ENCODE measurements at regions of chr4 and their contacts with region 1.

Region 1: DNA sequence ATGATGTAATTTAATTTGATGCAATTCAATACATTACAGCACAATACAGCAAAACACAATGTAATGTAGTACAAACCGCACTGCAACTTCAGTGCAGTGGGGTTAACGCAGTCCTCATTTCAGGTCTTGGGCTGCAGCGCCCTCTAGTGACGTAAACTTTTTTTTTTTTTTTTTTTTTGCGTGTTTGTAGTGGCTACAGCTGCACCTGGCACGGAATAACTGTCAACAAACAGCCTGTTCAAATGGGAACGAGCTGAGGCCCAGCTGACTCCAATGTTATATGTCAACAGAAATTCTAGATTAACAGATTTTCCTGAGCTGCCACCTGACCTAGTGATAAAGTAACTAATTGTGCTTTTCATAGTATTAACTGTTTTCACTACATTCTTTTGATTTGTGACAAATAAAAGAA is 33.5 kb upstream of the RASSF6 start:
- DNase-seq: peak in 2 of 10 donors; percentile 39 to 40
- H3K4me3 ChIP-seq: peak overlapping the region in 1 of 59 donors; percentile 5
- H3K27ac ChIP-seq: peak overlapping the region in 14 of 59 donors; percentile 18 to 62 (median 47)
- H3K27me3 ChIP-seq: peaks cover 0 to 6% (median 0%) of the 10 kb centered on the region in 45 donors
- CTCF ChIP-seq: peak; percentile 60 to 92 (median 80)

Region 2: DNA sequence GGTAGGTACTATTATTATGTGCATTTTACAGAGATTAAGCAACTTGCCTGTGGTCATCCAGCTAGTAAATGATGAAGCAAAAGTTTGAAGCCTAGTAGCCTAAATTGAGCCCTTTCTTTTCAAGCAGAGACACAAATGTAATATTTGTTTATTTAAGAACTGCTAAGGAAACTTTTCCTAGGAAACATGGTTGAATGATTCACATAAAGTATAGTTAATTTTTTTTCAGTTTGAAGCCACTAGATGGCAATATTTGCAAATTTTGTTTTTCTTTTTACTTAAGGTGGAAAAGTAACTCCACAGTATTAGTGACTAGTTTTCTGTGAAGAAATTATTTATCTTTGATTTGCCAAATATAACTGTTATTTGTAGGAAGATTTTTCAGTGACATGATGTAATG is 342.3 kb before region 1 on chr4:
- intact Hi-C with region 1: loop called (anchors 10 kb)
- DNase-seq: no peak
- H3K4me3 ChIP-seq: no peak overlapping the region
- H3K27ac ChIP-seq: no peak overlapping the region
- H3K27me3 ChIP-seq: no peaks in the 10 kb centered on the region
- CTCF ChIP-seq: peak in 54 of 56 donors; percentile 31 to 76 (median 55)

Region 3: GRCh38 chr4:73341454-73341853 is 312.2 kb before region 1 on chr4:
- intact Hi-C with region 1: loop called (anchors 1 to 5 kb)
- DNase-seq: peak in 6 of 10 donors; percentile 8 to 60 (median 42)
- H3K4me3 ChIP-seq: no peak overlapping the region
- H3K27ac ChIP-seq: no peak overlapping the region
- H3K27me3 ChIP-seq: no peaks in the 10 kb centered on the region
- CTCF ChIP-seq: peak; percentile 18 to 81 (median 68)

Region 4: DNA sequence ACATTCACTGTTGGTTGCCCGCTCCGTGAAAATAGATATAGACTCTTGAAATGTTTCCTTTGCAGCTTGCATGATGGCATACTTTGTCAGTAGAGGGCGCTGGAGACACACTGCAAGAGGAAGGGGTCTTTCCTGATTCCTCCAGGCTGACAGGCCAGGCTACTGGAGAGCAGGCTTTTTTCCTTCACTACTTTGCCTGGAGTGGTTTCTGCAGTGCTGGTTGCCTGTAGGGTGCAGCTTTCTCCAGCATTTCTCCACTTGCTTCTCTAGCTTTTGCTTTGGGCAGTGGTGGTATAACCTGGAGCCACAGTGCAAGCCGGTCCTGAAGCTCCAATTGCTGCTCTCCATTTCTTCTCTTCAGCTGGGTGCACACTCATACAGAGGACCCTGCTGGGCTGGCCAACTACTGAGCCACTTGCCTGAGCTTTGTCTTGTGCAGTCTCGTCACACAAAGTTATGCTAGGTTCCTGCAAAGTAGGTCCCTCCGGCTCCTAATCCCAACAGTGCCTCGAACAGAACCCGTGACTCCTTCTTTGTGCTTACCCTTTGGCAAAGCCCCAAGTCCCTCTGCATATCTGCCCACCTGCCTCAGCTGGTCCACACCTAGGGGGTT is 79.8 kb before region 1 on chr4:
- intact Hi-C with region 1: loop called in 1 of 2 experiments (anchors 5 kb)
- DNase-seq: peak in 4 of 10 donors; percentile 6 to 46 (median 30)
- H3K4me3 ChIP-seq: no peak overlapping the region
- H3K27ac ChIP-seq: no peak overlapping the region
- H3K27me3 ChIP-seq: peaks cover 0 to 4% (median 0%) of the 10 kb centered on the region in 45 donors
- CTCF ChIP-seq: peak in 55 of 56 donors; percentile 27 to 80 (median 65)

Region 5: DNA sequence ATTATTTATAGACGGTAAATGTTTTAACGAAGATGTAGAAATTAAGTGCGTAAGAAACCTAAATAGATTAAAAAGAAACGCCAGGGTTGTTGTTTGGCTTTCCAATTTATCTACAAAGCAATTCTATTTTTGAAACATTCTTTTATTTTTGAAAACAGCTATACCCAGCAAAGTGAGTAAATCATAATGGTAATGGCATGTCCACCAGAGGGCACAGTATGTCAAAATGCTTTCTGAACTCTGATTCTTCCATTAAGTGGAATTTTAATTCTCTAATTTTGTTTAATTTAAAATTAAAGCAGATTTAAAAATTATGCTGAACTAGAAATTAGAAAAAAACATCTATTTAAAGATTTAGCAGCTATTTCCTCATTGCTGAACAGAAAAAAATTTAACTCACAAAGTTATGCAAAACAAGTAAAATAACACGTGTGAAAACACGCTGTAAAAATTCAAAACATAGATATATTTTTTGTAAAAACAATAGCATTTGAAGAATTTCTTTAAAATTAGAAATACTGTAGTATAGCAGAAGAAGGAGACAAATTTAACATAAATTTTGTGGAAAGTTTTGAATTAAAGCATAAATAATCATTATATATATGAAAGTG is 60.0 kb before region 1 on chr4:
- intact Hi-C with region 1: loop called in 1 of 2 experiments (anchors 5 kb)
- DNase-seq: no peak
- H3K4me3 ChIP-seq: no peak overlapping the region
- H3K27ac ChIP-seq: no peak overlapping the region
- H3K27me3 ChIP-seq: peaks cover 0 to 4% (median 0%) of the 10 kb centered on the region in 45 donors
- CTCF ChIP-seq: peak in 55 of 56 donors; percentile 18 to 73 (median 55)

Measured in dorsolateral prefrontal cortex (tissue), 120 donors.